ENCODE measurements at regions of chr16 and their contacts with region 1.

Region 1: GRCh38 chr16:74862741-74863244 is 88.2 kb upstream of the FA2H start:
- DNase-seq: no peak
- H3K4me3 ChIP-seq: no peak overlapping the region
- H3K27ac ChIP-seq: peak overlapping the region in 1 of 4 donors; percentile 17
- H3K4me1 ChIP-seq: peaks cover 0 to 22% (median 7%) of the 10 kb centered on the region in 3 donors
- H3K27me3 ChIP-seq: no peaks in the 10 kb centered on the region
- CTCF ChIP-seq: peak; percentile 51 to 89 (median 86)
- POLR2A ChIP-seq: no peak

Region 2: DNA sequence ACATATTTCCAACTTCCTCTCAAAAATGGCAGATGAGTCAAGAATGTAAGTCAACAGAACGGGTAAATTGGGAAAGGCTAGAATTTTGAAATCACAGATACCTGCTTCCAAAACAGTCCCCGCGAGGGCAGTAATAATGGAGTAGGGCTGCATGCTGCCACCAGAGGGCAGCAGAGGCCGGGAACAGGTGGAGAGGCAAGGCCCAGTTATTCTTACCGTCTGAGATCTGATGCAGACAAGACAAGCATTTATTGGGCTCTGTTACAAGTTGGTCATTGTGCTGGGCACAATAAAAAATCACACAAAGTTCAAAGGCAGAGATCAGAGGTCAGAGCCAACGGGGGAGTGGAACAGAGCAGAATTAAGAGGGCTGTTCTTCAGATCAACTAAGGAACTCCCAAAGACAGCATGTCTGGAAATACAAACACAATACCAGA is 153.3 kb before region 1 on chr16:
- intact Hi-C with region 1: loop called (anchors 5 kb)
- DNase-seq: no peak
- H3K4me3 ChIP-seq: no peak overlapping the region
- H3K27ac ChIP-seq: no peak overlapping the region
- H3K4me1 ChIP-seq: peaks cover 0 to 6% (median 0%) of the 10 kb centered on the region in 3 donors
- H3K27me3 ChIP-seq: no peaks in the 10 kb centered on the region
- CTCF ChIP-seq: peak; percentile 78 to 98 (median 96)
- POLR2A ChIP-seq: no peak

Region 3: GRCh38 chr16:74954763-74955162 is 92.0 kb after region 1 on chr16:
- intact Hi-C with region 1: no loop called
- DNase-seq: no peak
- H3K4me3 ChIP-seq: no peak overlapping the region
- H3K27ac ChIP-seq: no peak overlapping the region
- H3K4me1 ChIP-seq: peaks cover 0 to 4% (median 0%) of the 10 kb centered on the region in 3 donors
- H3K27me3 ChIP-seq: no peaks in the 10 kb centered on the region
- CTCF ChIP-seq: no peak
- POLR2A ChIP-seq: no peak

Region 4: DNA sequence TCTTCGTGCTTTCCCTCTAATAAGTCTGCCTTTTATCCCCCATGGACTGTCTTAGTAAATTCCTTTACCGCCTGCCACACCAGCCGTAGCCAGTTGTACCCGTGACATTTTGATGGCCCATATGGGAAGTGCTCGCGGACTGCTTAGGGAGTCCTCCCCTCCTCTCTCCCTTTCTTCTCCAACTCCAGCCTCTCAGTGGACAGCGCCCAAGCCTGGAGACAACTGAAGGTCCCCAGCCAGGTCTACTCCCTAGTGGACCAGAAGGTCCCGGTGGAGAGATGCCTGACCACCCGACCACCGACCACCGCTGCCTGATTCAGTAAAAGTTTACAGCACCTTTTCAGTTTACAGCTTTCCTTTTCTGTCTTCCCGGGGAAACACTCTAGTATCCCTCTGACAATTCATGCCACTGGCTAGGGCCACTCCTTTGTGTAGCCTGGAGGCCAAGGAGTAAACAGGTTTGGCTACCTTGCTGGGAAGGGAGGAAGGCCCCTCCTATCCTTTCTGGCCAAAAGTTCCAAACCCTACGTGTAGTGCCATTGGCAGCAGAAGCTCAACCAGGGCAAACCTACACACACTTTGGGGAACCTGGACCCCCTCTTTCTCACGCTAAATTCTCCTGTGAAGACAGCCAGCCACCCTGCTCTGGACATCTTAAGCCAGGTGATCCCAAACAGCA is 326.2 kb after region 1 on chr16:
- intact Hi-C with region 1: no loop called
- DNase-seq: no peak
- H3K4me3 ChIP-seq: no peak overlapping the region
- H3K27ac ChIP-seq: no peak overlapping the region
- H3K4me1 ChIP-seq: peaks cover 0 to 24% (median 4%) of the 10 kb centered on the region in 3 donors
- H3K27me3 ChIP-seq: peaks cover 0 to 44% (median 0%) of the 10 kb centered on the region in 4 donors
- CTCF ChIP-seq: no peak
- POLR2A ChIP-seq: no peak